GM10248 (cell line): ENCODE measurements at regions of chr22 and their contacts with region 1.

Region 1: GRCh38 chr22:17742527-17742902 is 31.8 kb downstream of the BID start:
- DNase-seq: peak; percentile 92
- CTCF ChIP-seq: peak; percentile 87

Region 2: DNA sequence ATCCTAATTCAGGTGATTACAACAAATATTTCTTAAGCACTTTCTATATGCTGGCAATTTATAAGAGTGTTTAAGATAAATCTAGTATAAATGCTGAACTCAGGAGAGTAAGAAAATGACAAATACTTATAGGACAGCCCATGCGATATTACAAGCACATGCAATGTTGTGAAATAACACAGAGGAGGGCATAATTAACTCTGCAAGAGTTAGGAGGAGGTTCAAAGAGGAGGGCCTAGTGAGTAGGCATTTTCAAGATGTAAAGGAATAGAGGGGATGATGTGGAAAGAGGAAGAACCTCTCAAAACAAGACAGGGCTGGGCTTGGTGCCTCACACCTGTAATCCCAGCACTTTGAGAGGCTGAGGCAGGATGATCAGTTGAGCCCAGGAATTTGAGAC is 694.9 kb before region 1 on chr22:
- CTCF ChIA-PET with region 1: no interaction called
- POLR2A ChIA-PET with region 1: no interaction called
- DNase-seq: no peak
- CTCF ChIP-seq: no peak

Region 3: DNA sequence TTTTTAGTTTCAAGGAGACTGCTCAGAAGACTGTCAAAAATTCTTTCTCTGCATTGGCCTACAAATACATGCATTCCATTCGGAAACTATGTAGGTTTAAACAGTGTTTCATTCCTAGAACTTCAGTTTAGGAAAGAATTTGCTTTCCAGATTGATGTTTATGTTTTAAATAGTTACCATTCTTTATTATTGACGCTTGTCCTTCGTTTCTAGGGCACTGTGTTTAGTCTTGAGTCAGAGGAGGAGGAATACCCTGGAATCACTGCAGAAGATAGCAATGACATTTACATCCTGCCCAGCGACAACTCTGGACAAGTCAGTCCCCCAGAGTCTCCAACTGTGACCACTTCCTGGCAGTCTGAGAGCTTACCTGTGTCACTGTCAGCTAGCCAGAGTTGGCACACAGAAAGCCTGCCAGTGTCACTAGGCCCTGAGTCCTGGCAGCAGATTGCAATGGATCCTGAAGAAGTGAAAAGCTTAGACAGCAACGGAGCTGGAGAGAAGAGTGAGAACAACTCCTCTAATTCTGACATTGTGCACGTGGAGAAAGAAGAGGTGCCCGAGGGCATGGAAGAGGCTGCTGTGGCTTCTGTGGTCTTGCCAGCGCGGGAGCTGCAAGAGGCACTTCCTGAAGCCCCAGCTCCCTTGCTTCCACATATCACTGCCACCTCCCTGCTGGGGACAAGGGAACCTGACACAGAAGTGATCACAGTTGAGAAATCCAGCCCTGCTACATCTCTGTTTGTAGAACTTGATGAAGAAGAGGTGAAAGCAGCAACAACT is 15.9 kb before region 1 on chr22:
- CTCF ChIA-PET with region 1: interaction called, 36 read pairs
- POLR2A ChIA-PET with region 1: no interaction called
- DNase-seq: no peak
- CTCF ChIP-seq: no peak

Region 4: DNA sequence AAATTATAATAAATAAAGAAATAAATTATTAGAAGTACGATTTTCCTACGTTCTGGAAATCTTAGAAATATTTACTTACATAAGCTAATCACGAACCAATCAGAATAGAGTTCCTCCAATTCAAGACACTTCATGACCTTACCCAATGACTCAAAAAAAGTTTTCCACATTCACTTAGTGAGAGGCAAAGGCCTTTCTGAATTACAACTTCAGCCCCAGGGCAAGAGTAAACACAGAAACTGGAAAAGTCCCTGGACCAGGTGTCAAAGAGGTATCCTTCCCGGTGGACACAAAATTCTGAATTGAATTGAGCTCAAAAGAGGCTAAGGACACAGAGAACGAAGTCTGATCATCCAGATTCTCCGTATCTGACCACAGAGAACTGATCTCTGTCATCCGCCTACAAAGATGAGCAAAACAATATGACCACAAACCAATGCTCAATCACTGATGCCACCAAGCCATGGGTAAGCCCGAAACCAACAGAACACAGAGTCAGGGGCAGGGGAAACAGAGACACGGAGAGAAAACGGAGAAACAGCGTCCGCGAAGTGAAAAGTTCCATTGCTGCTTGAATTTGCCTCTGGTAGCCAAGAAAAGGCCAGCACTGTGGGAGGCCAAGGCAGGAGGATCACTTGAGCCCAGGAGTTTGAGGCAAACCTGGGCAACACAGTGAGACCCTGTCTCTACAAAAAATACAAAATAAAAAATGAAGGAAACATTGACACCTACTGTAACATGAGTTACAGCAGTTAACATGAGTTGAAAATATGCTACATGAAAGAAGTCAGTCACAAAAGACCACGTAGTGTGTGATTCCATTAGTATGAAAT is 24.9 kb after region 1 on chr22:
- CTCF ChIA-PET with region 1: interaction called, 46 read pairs
- POLR2A ChIA-PET with region 1: no interaction called
- DNase-seq: peak; percentile 67
- CTCF ChIP-seq: no peak

Region 5: GRCh38 chr22:17785185-17786184 is 43.0 kb after region 1 on chr22:
- CTCF ChIA-PET with region 1: interaction called, 72 read pairs
- POLR2A ChIA-PET with region 1: no interaction called
- DNase-seq: no peak
- CTCF ChIP-seq: peak; percentile 81

Region 6: GRCh38 chr22:17830043-17830961 is 87.8 kb after region 1 on chr22:
- CTCF ChIA-PET with region 1: interaction called, 30 read pairs
- POLR2A ChIA-PET with region 1: no interaction called
- DNase-seq: peak; percentile 89
- CTCF ChIP-seq: peak; percentile 98